ENCODE measurements at regions of chr6 and their contacts with region 1.

Region 1: GRCh38 chr6:35391240-35391968 is 49.0 kb downstream of the PPARD start:
- DNase-seq: peak; percentile 58 to 97
- H3K4me3 ChIP-seq: peak overlapping the region; percentile 47; the same call in 1 of the 2 replicates
- H3K27ac ChIP-seq: peak overlapping the region; percentile 100
- H3K4me1 ChIP-seq: peaks cover 57% of the 10 kb centered on the region
- H3K27me3 ChIP-seq: no peaks in the 10 kb centered on the region
- CTCF ChIP-seq: peak; percentile 29; the same call in 1 of the 2 replicates

Region 2: DNA sequence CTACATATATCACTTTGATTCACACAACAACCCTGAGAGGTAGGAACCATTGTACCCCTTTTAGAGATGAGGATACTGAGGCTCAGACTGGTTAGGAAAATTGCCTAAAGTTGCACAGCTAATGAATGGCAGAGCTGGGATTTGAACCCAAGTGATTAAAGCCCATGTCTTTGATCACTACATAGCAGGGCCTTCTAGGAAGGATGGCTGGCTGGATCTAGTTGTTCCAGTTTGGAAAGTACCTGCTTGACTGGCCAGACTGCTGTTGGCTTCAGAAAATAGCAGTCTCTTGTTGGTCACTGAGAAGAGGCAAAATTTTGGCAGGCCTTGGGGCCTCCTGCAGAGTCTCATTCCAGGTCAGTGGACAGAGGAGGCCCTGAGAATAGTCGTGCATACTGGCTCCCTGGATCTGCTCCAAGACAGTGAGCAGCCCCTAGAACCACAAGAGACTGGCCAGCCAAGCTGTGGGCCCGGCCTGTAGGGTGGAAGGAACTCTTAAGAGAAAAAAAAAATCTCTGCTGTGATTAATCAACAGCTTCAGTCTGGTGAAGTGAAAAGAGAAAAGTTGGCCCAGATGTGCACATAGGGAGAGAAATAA is 31.6 kb before region 1 on chr6:
- CTCF ChIA-PET with region 1: no interaction called
- POLR2A ChIA-PET with region 1: no interaction called
- intact Hi-C with region 1: loop called (anchors 1 kb)
- DNase-seq: peak; percentile 80 to 92
- H3K4me3 ChIP-seq: no peak overlapping the region
- H3K27ac ChIP-seq: peak overlapping the region; percentile 79
- H3K4me1 ChIP-seq: peaks cover 25% of the 10 kb centered on the region
- H3K27me3 ChIP-seq: no peaks in the 10 kb centered on the region
- CTCF ChIP-seq: no peak

Region 3: DNA sequence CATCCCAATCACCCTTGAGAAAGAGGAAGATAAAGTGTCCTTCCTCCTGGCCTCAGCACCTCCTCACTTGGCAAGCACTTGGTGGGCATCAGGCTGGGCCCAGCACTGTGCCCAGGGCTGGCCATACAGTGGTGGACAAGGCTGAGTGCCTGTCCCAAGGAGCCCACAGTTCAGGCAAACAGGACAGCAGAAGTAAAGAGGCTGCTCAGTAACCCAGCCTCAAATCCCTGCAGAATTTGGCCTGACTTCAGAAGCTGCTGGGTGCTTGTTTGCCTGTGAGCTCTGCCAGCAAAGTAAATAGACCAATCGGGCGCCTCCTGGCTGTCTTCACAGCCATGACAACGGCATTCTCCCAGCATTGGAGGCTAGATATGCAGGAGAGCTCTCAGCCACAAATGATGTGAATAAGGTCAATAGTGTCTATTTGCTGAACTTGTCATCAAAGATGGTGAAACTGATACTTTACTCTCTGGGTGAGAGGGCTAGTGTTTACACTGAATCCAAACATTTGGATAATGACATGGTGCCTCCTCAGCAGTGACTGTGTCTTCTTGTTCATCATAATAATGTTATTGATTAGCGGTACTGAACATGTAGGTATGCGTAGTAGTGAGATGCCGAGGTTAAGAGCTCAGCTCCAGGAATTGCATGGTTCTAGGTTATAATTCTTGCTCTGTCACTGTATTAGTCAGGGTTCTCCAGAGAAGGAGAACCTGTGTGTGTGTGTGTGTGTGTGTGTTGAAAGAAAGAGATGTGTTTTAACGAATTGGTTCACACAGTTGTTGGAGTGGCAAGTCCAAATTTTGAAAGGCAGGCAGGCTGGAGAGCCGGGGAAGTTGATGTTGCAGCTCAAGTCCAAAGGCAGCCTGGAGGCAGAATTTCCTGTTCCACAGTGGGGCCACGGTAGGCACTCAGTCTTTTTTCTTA is 23.9 kb after region 1 on chr6:
- CTCF ChIA-PET with region 1: no interaction called
- POLR2A ChIA-PET with region 1: no interaction called
- intact Hi-C with region 1: loop called (anchors 1 kb)
- DNase-seq: peak; percentile 55 to 95
- H3K4me3 ChIP-seq: no peak overlapping the region
- H3K27ac ChIP-seq: peak overlapping the region; percentile 68
- H3K4me1 ChIP-seq: peaks cover 15% of the 10 kb centered on the region
- H3K27me3 ChIP-seq: no peaks in the 10 kb centered on the region
- CTCF ChIP-seq: peak; percentile 77

Region 4: DNA sequence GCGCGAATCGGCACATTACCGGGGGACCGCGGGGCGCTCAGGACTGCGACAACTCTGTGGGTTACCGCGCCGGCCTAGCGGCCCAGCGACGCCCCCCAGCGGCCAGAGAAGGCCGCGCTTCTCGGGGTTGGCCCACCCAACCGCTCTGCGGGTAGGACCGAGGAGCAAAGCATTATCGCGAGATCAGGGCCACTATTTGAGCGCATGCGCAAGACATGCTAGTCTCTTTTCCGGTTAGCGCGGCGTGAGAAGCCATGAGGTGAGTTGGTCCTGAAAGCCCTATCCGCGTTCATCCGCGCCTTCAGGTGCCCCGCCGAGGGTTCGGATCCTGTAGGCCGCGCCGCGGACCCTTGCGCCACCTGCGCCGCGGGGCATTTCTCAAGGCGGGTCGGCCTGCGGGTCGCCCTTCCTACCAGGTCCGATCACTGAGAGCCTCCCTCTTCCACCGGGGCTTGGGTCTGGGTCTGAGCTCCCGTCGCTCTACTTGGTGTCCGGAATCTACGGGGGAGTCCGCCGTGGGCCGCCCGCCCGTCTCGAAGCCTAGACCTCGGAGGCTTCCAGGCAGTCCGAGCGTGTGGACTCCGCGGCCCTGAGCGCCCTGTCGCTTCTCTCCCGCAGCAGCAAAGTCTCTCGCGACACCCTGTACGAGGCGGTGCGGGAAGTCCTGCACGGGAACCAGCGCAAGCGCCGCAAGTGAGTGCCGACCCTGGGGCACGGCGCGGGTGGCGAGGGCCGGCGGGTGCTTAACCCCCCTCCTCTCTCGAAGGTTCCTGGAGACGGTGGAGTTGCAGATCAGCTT is 77.0 kb after region 1 on chr6 and contains the start of gene RPL10A:
- CTCF ChIA-PET with region 1: no interaction called
- POLR2A ChIA-PET with region 1: interaction called, 3 read pairs
- intact Hi-C with region 1: loop called (anchors 5 kb)
- DNase-seq: peak; percentile 88 to 91
- H3K4me3 ChIP-seq: peak within 1 kb of the TSS; percentile 94
- H3K27ac ChIP-seq: peak within 1 kb of the TSS; percentile 96
- H3K4me1 ChIP-seq: peaks cover 28% of the 10 kb centered on the region
- H3K27me3 ChIP-seq: no peaks in the 10 kb centered on the region
- CTCF ChIP-seq: peak; percentile 93
- total RNA-seq, gene RPL10A: 1,335 and 1,742 TPM in 2 replicates

Measured in PC-9 (cell line).